ENCODE measurements at regions of chr14 and their contacts with region 1.

Region 1: DNA sequence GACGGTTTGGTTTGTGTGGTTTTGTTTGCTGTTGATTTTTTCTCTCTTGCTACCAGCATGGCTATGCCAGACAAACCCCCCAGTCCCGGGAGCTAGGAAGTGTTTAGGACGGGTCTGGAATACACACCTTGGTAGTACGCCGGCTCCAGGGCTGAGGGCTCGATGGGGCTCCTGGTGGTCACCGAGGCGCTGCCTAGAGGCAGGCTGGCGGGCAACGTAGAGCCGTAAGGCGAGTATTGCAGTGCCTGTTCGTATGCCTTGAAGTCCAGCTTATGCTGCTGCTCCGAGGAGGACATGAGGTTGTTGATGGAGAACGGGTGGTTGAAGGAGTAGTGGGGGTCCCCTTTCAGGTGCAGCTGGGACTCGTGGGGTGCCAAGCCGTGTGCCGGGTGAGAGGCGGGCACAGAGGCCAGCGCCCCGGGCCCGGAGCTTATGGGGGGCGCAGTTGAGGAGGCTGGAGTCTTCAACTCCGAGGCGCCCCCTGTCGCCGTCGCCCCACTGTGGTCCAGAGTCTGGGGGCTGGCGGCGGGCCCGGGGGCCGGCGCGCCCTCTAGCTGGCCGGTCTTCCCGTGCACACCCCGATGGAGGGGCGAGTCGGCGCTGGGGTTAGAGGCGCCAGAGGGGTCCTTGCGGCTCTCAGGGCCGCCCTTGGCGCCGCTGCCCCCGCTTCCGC is 3.6 kb downstream of the FOXA1 start:
- DNase-seq: no peak
- H3K4me3 ChIP-seq: peak overlapping the region in 2 of 3 donors; percentile 55 to 80
- H3K27ac ChIP-seq: peak overlapping the region; percentile 82 to 84
- H3K4me1 ChIP-seq: peaks cover 0 to 5% of the 10 kb centered on the region in 2 donors
- H3K27me3 ChIP-seq: peaks cover 12 to 94% of the 10 kb centered on the region in 2 donors
- CTCF ChIP-seq: peak in 1 of 3 donors; percentile 15
- POLR2A ChIP-seq: no peak

Region 2: GRCh38 chr14:36238666-36239363 is 1352.6 kb before region 1 on chr14:
- intact Hi-C with region 1: no loop called
- DNase-seq: no peak
- H3K4me3 ChIP-seq: no peak overlapping the region
- H3K27ac ChIP-seq: peak overlapping the region in 1 of 2 donors; percentile 61
- H3K4me1 ChIP-seq: no peaks in the 10 kb centered on the region
- H3K27me3 ChIP-seq: no peaks in the 10 kb centered on the region
- CTCF ChIP-seq: no peak
- POLR2A ChIP-seq: no peak

Region 3: DNA sequence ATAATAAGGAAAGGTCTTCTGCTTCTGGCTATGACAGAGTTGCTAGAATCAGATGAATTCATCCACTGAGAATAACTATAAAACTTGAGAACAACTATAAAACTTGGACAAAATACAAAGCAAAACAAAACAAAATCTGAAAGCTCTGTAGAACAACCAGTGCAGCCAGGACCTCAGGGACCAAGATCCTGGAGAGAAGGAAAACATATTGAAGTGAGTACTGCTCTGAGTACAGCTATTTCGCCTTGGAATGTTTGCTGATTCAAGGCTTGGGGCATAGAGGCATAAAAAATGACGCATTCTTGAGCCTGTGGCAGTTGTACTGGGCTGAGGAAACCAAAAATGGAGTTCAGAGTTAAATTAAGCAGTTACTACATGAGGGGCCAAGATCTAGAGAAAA is 18.1 kb before region 1 on chr14:
- intact Hi-C with region 1: loop called (anchors 1 kb)
- DNase-seq: no peak
- H3K4me3 ChIP-seq: no peak overlapping the region
- H3K27ac ChIP-seq: no peak overlapping the region
- H3K4me1 ChIP-seq: no peaks in the 10 kb centered on the region
- H3K27me3 ChIP-seq: no peaks in the 10 kb centered on the region
- CTCF ChIP-seq: no peak
- POLR2A ChIP-seq: no peak